GM10248 (cell line): ENCODE measurements at regions of chr11 and their contacts with region 1.

Region 1: DNA sequence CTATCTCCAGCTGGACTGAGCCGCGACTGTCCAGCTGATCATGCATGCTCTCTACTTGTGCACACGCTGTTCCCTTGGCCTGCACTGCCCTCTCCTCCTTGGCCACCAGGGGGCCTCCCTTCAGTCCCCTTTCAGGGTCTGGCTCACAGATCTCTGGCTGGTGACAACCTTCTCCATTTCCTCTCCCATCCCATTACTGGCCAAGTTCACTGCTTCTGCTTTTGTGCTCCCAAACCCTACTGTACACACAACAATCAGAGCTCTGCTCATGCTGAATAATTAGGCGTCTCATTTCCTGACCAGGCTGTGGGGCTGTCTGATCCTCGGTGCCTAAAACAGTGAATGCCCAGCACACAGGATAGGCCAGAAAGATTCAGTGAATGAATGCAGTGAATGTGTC is 224.0 kb upstream of the NARS2 start:
- DNase-seq: peak; percentile 61
- CTCF ChIP-seq: peak; percentile 91

Region 2: DNA sequence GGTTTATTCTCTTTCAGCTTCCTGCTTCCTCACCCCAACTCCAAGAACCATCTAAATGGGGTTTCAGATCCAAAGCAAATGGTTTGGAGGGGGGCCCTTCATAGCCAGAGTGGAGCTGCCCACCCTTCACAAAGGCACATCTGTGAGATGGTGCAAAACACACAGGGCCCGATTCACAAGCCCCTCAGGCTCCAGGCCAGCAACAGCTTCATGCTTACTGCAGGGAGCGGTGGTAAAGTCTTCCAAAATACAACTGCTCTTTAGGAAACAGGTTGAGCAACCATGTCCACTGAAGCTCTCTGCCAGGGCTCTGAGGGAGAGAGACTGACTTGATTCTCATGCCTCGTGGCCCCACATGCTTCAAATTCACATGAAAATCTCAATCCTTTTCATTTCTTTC is 11.0 kb before region 1 on chr11:
- CTCF ChIA-PET with region 1: interaction called, 15 read pairs
- POLR2A ChIA-PET with region 1: no interaction called
- DNase-seq: no peak
- CTCF ChIP-seq: no peak